PC-9 (cell line): ENCODE measurements at regions of chr10 and their contacts with region 1.

Region 1: GRCh38 chr10:68684413-68684812 is 36.6 kb upstream of the CCAR1 start:
- DNase-seq: no peak
- H3K4me3 ChIP-seq: no peak overlapping the region
- H3K27ac ChIP-seq: no peak overlapping the region
- H3K4me1 ChIP-seq: no peaks in the 10 kb centered on the region
- H3K27me3 ChIP-seq: no peaks in the 10 kb centered on the region
- CTCF ChIP-seq: no peak

Region 2: GRCh38 chr10:68408898-68409518 is 275.4 kb before region 1 on chr10:
- CTCF ChIA-PET with region 1: no interaction called
- POLR2A ChIA-PET with region 1: no interaction called
- intact Hi-C with region 1: no loop called
- DNase-seq: no peak
- H3K4me3 ChIP-seq: no peak overlapping the region
- H3K27ac ChIP-seq: no peak overlapping the region
- H3K4me1 ChIP-seq: peaks cover 9% of the 10 kb centered on the region
- H3K27me3 ChIP-seq: no peaks in the 10 kb centered on the region
- CTCF ChIP-seq: no peak

Region 3: DNA sequence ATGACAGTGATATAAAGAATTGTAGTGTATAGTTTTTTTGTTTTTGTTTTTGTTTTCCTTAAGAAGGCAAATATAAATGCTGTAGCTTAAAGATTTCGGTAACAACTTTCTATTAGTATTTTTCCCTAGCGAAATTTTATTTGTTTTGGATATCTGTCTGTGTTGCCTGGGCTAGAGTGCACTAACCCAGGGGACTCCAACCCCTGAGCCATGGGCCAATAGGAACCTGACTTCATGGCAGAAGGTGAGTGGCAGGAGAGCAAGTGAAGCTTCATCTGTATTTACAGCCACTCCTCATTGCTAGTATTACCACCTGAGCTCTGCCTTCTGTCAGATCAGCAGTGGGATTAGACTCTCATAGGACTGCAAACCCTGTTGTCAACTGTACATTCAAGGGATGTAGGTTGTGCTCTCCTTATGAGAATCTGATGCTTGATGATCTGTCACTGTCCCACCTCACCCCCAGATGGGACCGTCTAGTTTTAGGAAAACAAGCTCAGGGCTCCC is 28.7 kb before region 1 on chr10:
- CTCF ChIA-PET with region 1: interaction called, 10 read pairs
- POLR2A ChIA-PET with region 1: no interaction called
- intact Hi-C with region 1: no loop called
- DNase-seq: no peak
- H3K4me3 ChIP-seq: no peak overlapping the region
- H3K27ac ChIP-seq: no peak overlapping the region
- H3K4me1 ChIP-seq: no peaks in the 10 kb centered on the region
- H3K27me3 ChIP-seq: no peaks in the 10 kb centered on the region
- CTCF ChIP-seq: no peak